ENCODE measurements at regions of chr20 and their contacts with region 1.

Region 1: DNA sequence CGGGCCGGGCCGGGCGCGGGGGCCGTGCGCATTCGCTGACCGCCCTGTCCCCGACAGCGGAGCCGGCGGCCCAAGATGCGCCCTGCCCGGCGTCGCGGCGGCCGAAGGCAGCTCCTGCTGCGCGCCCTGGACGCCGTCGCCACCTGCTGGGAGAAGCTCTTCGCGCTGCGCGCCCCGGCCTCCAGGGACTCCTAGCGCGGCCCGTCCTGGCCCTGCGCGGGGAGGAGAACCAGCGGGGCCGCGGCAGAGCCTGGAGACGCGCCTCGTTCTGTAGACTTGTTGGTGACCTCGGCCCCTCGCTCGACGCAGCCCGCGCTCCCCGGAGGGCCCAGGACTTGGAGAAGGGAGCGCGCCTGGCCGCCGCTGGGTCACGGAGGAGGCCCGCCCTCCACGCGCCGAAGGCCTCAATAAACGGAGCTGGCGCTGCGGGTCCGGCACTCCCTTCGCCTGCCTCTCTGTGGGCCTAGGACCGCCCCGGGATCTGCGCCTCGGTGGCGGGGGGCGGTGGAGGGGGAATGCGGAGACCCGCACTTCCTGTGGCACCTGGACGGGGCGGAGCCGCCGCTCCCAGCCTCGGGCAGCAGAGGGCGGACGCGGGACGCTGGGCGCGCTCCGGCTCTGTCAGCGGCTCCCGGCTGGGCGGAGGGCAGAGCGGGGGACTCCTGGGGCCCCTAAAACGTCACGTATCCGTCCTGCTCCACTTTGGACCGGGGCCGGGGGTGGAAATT is 2.7 kb downstream of the C20orf204 start:
- DNase-seq: peak; percentile 81
- ATAC-seq: peak; percentile 89
- H3K4me3 Mint-ChIP-seq: peak overlapping the region; percentile 73
- H3K27ac Mint-ChIP-seq: no peak overlapping the region
- H3K4me1 Mint-ChIP-seq: peaks cover 17% of the 10 kb centered on the region
- H3K27me3 Mint-ChIP-seq: peaks cover 9% of the 10 kb centered on the region
- CTCF ChIP-seq: peak; percentile 17

Region 2: GRCh38 chr20:63980806-63981728 is 57.7 kb before region 1 on chr20 and contains the start of gene PRPF6:
- CTCF ChIA-PET with region 1: interaction called, 18 read pairs
- POLR2A ChIA-PET with region 1: interaction called, 18 read pairs
- intact Hi-C with region 1: loop called (anchors 1 kb)
- DNase-seq: peak; percentile 90
- ATAC-seq: peak; percentile 65
- H3K4me3 Mint-ChIP-seq: peak within 1 kb of the TSS; percentile 92
- H3K27ac Mint-ChIP-seq: peak within 1 kb of the TSS; percentile 94
- H3K4me1 Mint-ChIP-seq: peaks cover 50% of the 10 kb centered on the region
- H3K27me3 Mint-ChIP-seq: no peaks in the 10 kb centered on the region
- CTCF ChIP-seq: peak; percentile 25
- total RNA-seq, gene PRPF6: 75.7 and 75.8 TPM in 2 replicates

Region 3: DNA sequence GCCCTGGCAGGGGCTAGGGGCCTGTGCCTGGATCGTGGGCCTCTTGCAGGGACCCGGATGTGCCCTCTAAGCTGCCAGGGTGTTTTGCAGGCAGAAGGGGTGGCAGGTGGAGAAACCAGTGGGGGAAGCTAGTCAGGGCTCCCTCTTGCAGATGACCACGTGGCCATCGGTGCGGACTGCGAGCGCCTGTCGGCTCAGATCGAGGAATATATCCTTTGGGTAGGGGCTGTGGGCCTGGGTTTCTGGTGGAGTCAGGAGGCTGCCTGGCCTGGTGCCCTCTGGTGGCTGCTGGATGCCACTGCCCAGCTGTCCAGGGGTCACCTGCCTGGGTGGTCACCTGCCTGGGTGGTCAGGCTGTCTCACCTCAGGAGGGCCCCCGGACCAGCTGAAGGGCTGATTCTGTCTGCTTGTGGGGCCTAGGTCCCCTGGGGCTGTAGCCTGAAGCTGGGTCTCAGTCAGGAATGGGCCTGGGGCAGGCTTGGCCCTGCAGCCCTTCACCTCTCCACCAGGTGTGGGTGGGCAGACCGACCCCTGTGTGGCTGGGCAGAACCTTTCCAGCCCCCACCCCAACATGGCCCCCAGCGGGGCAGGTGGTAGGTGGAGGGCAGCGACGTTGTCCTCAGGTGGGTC is 31.0 kb after region 1 on chr20:
- CTCF ChIA-PET with region 1: interaction called, 12 read pairs
- POLR2A ChIA-PET with region 1: interaction called, 6 read pairs
- intact Hi-C with region 1: loop called (anchors 1 kb)
- DNase-seq: no peak
- ATAC-seq: no peak
- H3K4me3 Mint-ChIP-seq: no peak overlapping the region
- H3K27ac Mint-ChIP-seq: no peak overlapping the region
- H3K4me1 Mint-ChIP-seq: peaks cover 71% of the 10 kb centered on the region
- H3K27me3 Mint-ChIP-seq: no peaks in the 10 kb centered on the region
- CTCF ChIP-seq: no peak

Region 4: GRCh38 chr20:64101731-64102621 is 63.2 kb after region 1 on chr20:
- CTCF ChIA-PET with region 1: no interaction called
- POLR2A ChIA-PET with region 1: no interaction called
- intact Hi-C with region 1: loop called (anchors 5 kb)
- DNase-seq: peak; percentile 81
- ATAC-seq: peak; percentile 42
- H3K4me3 Mint-ChIP-seq: peak overlapping the region; percentile 82
- H3K27ac Mint-ChIP-seq: no peak overlapping the region
- H3K4me1 Mint-ChIP-seq: peaks cover 32% of the 10 kb centered on the region
- H3K27me3 Mint-ChIP-seq: peaks cover 5% of the 10 kb centered on the region
- CTCF ChIP-seq: no peak

Region 5: GRCh38 chr20:64258071-64258823 is 219.5 kb after region 1 on chr20:
- CTCF ChIA-PET with region 1: no interaction called
- POLR2A ChIA-PET with region 1: interaction called, 11 read pairs
- intact Hi-C with region 1: no loop called
- DNase-seq: no peak
- ATAC-seq: no peak
- H3K4me3 Mint-ChIP-seq: no peak overlapping the region
- H3K27ac Mint-ChIP-seq: no peak overlapping the region
- H3K4me1 Mint-ChIP-seq: peaks cover 57% of the 10 kb centered on the region
- H3K27me3 Mint-ChIP-seq: no peaks in the 10 kb centered on the region
- CTCF ChIP-seq: no peak

Measured in activated B cell treated with CpG ODN at 0.5 μM for 24 hours (primary cell).